ENCODE measurements at regions of chr1 and their contacts with region 1.

Region 1: GRCh38 chr1:154220071-154220969 is at the start of gene UBAP2L:
- DNase-seq: peak; percentile 99
- ATAC-seq: peak; percentile 92
- H3K4me3 Mint-ChIP-seq: peak within 1 kb of the TSS; percentile 99
- H3K27ac Mint-ChIP-seq: peak within 1 kb of the TSS; percentile 100
- H3K4me1 Mint-ChIP-seq: peaks cover 70% of the 10 kb centered on the region
- H3K27me3 Mint-ChIP-seq: no peaks in the 10 kb centered on the region
- total RNA-seq, gene UBAP2L: 205 to 255 TPM

Region 2: GRCh38 chr1:153202006-153202405 is 1018.3 kb before region 1 on chr1:
- CTCF ChIA-PET with region 1: no interaction called
- POLR2A ChIA-PET with region 1: no interaction called
- intact Hi-C with region 1: no loop called
- DNase-seq: no peak
- ATAC-seq: no peak
- H3K4me3 Mint-ChIP-seq: no peak overlapping the region
- H3K27ac Mint-ChIP-seq: no peak overlapping the region
- H3K4me1 Mint-ChIP-seq: no peaks in the 10 kb centered on the region
- H3K27me3 Mint-ChIP-seq: peaks cover 31% of the 10 kb centered on the region

Region 3: DNA sequence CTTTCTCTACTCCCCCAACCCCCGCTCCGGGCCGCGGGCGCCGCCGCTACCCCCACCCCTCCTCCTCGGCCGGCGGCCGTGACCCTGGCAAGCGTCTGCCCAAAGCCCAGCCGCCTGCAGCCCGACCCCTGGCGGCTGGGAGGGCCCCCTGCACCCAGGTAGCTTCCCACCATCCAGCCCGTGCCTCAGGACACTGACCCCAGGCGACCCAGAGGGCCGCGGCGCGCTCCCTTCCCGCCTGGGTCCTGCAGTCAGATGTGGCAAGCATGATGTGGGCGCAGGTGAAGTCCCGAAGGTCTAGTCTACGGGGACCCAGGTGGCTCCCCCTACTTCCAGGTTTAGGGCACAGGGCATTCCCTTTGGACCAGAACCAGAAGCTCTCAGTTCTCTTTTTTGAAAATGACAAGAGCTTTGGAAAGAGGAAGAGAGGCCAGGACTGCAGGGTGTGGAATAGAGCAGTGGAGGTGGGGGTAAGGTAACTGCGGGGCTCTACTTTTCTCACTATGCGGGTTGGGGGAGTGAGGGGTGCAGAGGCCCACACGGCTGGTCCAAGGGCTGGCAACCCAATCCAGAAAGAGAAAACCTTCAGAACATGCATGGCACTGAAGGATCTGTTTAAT is 273.6 kb before region 1 on chr1 and contains the start of gene DENND4B:
- CTCF ChIA-PET with region 1: no interaction called
- POLR2A ChIA-PET with region 1: no interaction called
- intact Hi-C with region 1: loop called in 1 of 2 experiments (anchors 1 kb)
- DNase-seq: peak; percentile 87
- ATAC-seq: peak; percentile 74
- H3K4me3 Mint-ChIP-seq: peak within 1 kb of the TSS; percentile 88
- H3K27ac Mint-ChIP-seq: peak within 1 kb of the TSS; percentile 96
- H3K4me1 Mint-ChIP-seq: peaks cover 24% of the 10 kb centered on the region
- H3K27me3 Mint-ChIP-seq: no peaks in the 10 kb centered on the region
- total RNA-seq, gene DENND4B: 100 to 110 TPM

Region 4: DNA sequence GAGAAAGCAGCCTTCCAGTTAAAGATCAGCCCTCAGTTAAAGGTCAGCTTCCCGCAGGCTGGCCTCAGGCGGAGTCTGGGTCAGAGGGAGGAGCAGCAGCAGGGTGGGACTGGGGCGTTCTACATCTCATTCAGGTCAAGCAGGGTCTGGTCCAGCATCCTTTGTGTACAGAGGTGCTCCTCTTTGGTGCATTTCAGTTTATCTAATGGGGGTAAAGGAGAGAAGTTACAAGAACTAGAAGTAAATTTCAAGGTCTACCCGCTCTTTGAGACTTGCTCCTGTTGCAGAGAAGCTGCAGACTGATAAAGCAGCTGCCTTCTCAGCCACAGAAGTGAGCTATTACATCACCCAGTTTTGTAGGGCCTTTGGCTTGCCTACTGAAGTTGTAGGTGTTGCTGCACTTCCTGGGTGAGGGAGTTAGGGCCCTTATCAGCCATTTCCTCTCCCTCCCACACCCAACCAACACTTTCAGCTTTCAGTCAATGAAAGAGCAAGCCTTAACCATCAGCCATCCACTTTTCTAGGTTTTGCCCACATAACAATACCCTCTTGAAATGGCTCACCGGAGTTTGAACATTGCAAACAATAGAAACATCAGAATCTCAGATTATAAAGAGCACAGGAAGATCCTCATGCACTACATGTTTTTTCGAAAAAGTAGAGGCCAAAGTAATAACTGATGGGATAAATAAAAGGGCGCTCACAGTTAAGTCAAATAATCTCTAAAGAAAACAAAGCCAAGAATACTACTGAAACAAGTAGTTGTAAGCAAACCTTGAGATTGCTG is 62.6 kb before region 1 on chr1:
- CTCF ChIA-PET with region 1: interaction called, 3 read pairs
- POLR2A ChIA-PET with region 1: interaction called, 3 read pairs
- intact Hi-C with region 1: loop called in 1 of 2 experiments (anchors 1 kb)
- DNase-seq: peak; percentile 83
- ATAC-seq: peak; percentile 98
- H3K4me3 Mint-ChIP-seq: peak overlapping the region; percentile 60
- H3K27ac Mint-ChIP-seq: peak overlapping the region; percentile 96
- H3K4me1 Mint-ChIP-seq: peaks cover 71% of the 10 kb centered on the region
- H3K27me3 Mint-ChIP-seq: no peaks in the 10 kb centered on the region

Region 5: DNA sequence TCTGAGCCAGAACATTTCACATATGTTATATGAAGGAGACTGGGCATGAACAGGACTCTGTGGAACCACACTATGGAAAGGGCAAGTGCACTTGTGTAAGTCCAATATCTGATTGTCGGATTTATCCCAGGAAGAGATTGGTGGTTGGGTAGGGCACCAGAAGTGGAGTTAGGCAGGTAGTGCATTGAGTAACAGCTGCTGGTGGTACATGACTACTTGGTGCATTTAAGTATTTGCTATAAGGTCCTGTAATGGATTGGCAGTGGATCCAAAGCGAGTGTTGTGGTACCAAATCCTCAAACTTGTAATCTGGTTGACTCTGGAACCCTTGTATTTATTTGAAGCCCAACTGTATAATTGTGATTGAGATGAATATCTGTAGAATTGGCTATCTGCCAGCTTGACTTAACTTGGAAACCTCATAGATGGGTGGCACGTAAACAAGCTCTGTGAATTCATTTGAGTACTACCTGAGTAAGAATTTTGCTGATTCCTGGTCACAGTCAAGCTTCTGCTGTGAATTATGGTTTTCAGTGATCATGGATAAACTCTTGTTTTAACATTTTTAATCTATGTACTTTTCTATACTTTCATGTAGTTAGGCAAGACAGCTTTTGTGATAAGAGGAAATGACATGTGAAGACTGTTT is 21.5 kb after region 1 on chr1:
- CTCF ChIA-PET with region 1: interaction called, 3 read pairs
- POLR2A ChIA-PET with region 1: interaction called, 3 read pairs
- intact Hi-C with region 1: loop called in 1 of 2 experiments (anchors 2 kb)
- DNase-seq: no peak
- ATAC-seq: peak; percentile 67
- H3K4me3 Mint-ChIP-seq: no peak overlapping the region
- H3K27ac Mint-ChIP-seq: peak overlapping the region; percentile 68
- H3K4me1 Mint-ChIP-seq: peaks cover 36% of the 10 kb centered on the region
- H3K27me3 Mint-ChIP-seq: no peaks in the 10 kb centered on the region

Region 6: DNA sequence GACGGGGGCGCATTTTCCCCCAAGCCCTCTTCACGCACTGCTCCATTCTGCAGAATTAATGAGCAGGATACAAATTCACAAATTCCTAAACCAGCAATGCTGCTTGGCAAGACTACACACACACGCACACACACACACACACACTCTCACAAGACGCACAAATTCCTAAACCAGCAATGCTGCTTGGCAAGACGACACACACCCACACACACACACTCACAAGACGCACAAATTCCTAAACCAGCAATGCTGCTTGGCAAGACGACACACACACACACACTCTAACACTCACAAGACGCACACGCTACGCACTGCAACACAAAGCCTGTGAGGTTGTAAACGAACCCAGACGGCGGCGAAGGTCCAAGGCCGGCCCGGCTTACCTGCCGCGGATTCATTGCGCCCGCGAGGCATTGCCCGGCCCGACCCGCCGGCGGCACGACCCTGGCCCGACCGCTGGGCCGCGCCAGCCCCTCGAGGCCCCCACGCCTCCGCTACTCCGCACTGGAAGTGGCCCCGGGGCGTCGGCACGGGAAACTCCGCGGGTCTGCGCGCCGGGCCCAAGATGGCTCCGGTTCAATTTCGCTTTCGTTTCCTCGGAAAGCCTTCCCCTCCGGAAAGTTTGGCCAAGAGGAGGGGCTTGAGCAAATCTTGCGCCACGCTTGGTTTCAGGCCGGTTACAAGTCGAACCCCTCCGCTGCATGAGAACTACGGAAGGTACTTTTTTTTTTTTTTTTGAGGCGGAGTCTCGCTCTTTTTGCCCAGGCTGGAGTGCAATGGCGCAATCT is 387.5 kb after region 1 on chr1 and contains the start of gene ADAR:
- CTCF ChIA-PET with region 1: no interaction called
- POLR2A ChIA-PET with region 1: no interaction called
- intact Hi-C with region 1: loop called in 1 of 2 experiments (anchors 1 kb)
- DNase-seq: peak; percentile 95
- ATAC-seq: peak; percentile 69
- H3K4me3 Mint-ChIP-seq: peak within 1 kb of the TSS; percentile 95
- H3K27ac Mint-ChIP-seq: peak within 1 kb of the TSS; percentile 99
- H3K4me1 Mint-ChIP-seq: peaks cover 75% of the 10 kb centered on the region
- H3K27me3 Mint-ChIP-seq: no peaks in the 10 kb centered on the region
- total RNA-seq, gene ADAR: 310 to 332 TPM

Region 7: GRCh38 chr1:155135415-155136028 is 915.2 kb after region 1 on chr1 and contains the start of gene SLC50A1:
- CTCF ChIA-PET with region 1: interaction called, 3 read pairs
- POLR2A ChIA-PET with region 1: no interaction called
- intact Hi-C with region 1: loop called in 1 of 2 experiments (anchors 5 kb)
- DNase-seq: peak; percentile 97
- ATAC-seq: peak; percentile 78
- H3K4me3 Mint-ChIP-seq: peak within 1 kb of the TSS; percentile 96
- H3K27ac Mint-ChIP-seq: peak within 1 kb of the TSS; percentile 97
- H3K4me1 Mint-ChIP-seq: peaks cover 35% of the 10 kb centered on the region
- H3K27me3 Mint-ChIP-seq: no peaks in the 10 kb centered on the region
- total RNA-seq, gene SLC50A1: 50.2 to 58.0 TPM